CD4-positive, alpha-beta memory T cell (primary cell): ENCODE measurements at regions of chr13 and their contacts with region 1.

Region 1: DNA sequence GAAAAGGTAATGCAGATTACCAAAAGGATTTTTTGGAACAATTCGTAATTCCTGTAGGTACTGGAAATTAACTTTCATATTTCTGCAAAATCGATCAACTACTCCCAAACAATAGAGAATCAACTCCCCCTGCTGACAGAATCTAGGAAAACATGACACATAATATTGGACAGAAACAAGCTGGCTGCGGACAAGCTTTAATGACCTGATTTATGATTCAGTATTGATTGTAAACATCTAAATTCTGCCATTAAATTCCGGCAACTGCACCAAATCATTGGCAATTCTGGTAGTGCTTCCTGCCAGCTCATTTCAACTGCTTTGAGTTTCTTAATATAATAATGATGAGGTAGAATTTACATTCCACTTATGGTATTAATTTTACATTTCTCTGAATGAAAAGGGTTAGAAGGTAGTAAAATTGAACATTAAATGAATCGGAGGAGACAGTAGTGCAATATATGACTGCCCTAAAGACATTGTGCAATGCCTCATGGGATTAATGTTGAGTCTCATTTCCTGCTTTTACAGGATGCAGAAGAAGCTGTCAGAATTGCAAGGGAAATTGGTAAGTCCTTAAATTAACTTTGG is 146.5 kb downstream of the PCCA start:
- DNase-seq: peak in 4 of 5 donors; percentile 37 to 52 (median 44)
- H3K4me3 ChIP-seq: no peak overlapping the region
- H3K4me3 Mint-ChIP-seq: peak overlapping the region in 2 of 8 donors; percentile 13 to 70
- H3K27ac ChIP-seq: no peak overlapping the region
- H3K27ac Mint-ChIP-seq: no peak overlapping the region
- H3K4me1 ChIP-seq: peaks cover 6% of the 10 kb centered on the region
- H3K4me1 Mint-ChIP-seq: peaks cover 4 to 5% (median 4%) of the 10 kb centered on the region in 4 donors
- H3K27me3 ChIP-seq: no peaks in the 10 kb centered on the region
- H3K27me3 Mint-ChIP-seq: peaks cover 0 to 1% of the 10 kb centered on the region in 2 donors

Region 2: GRCh38 chr13:99916366-99917103 is 318.9 kb before region 1 on chr13:
- CTCF ChIA-PET with region 1: interaction called, 65 read pairs
- POLR2A ChIA-PET with region 1: interaction called, 3 read pairs
- intact Hi-C with region 1: loop called (anchors 1 kb)
- DNase-seq: peak; percentile 45 to 52 (median 49)
- H3K4me3 ChIP-seq: no peak overlapping the region
- H3K4me3 Mint-ChIP-seq: no peak overlapping the region
- H3K27ac ChIP-seq: no peak overlapping the region
- H3K27ac Mint-ChIP-seq: no peak overlapping the region
- H3K4me1 ChIP-seq: peaks cover 24% of the 10 kb centered on the region
- H3K4me1 Mint-ChIP-seq: peaks cover 12 to 21% (median 18%) of the 10 kb centered on the region in 4 donors
- H3K27me3 ChIP-seq: no peaks in the 10 kb centered on the region
- H3K27me3 Mint-ChIP-seq: peaks cover 0 to 2% of the 10 kb centered on the region in 2 donors